ENCODE measurements at regions of chr4 and their contacts with region 1.

Region 1: DNA sequence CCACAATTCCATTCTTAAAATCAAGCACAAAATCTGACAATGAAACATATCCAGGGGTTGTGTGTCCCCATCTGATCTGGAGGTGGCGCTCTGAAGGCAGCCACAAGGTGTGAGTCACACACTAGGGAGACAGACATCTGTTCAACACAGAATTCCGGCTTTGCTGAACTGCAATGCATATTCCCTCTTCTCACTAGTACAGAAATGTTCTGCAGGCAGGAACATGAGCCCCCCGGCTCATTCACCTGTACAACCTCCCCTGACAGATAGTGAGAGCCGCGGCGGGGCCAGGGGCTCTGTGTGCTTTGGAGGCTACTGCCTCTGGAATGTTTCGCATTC is 41.9 kb downstream of the WDR1 start:
- DNase-seq: no peak
- ATAC-seq: no peak
- H3K4me3 ChIP-seq: no peak overlapping the region
- H3K27ac ChIP-seq: no peak overlapping the region
- H3K4me1 ChIP-seq: peaks cover 6 to 29% (median 22%) of the 10 kb centered on the region in 9 donors
- H3K27me3 ChIP-seq: no peaks in the 10 kb centered on the region
- CTCF ChIP-seq: peak in 5 of 9 donors; percentile 27 to 44 (median 42)

Region 2: DNA sequence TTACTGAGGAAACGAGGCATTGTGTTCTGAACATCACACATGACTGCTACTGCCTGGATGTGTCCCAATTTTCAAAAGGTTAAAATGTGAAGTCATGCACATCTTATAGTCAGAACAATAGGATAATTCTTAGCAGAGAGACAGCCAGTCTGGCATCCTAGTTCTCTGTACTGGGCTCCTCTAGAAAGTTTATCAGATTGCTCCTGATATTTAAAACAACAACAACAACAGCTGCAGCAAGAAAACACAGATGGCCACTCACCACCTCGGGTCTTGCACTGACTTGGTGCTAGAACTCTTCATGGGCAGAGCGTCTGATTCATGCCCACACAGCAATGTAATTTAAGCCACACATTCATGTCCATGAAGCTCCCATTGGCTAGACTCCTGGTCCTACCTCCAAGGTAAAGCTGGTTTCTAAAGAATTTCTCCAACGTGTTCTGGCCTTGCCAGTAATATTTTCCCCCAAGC is 20.1 kb before region 1 on chr4:
- intact Hi-C with region 1: loop called in 1 of 10 experiments (anchors 2 kb)
- DNase-seq: no peak
- ATAC-seq: peak; percentile 50 to 84 (median 73)
- H3K4me3 ChIP-seq: no peak overlapping the region
- H3K27ac ChIP-seq: peak overlapping the region; percentile 13 to 86 (median 46)
- H3K4me1 ChIP-seq: peaks cover 0 to 44% (median 12%) of the 10 kb centered on the region in 9 donors
- H3K27me3 ChIP-seq: no peaks in the 10 kb centered on the region
- CTCF ChIP-seq: no peak

Region 3: DNA sequence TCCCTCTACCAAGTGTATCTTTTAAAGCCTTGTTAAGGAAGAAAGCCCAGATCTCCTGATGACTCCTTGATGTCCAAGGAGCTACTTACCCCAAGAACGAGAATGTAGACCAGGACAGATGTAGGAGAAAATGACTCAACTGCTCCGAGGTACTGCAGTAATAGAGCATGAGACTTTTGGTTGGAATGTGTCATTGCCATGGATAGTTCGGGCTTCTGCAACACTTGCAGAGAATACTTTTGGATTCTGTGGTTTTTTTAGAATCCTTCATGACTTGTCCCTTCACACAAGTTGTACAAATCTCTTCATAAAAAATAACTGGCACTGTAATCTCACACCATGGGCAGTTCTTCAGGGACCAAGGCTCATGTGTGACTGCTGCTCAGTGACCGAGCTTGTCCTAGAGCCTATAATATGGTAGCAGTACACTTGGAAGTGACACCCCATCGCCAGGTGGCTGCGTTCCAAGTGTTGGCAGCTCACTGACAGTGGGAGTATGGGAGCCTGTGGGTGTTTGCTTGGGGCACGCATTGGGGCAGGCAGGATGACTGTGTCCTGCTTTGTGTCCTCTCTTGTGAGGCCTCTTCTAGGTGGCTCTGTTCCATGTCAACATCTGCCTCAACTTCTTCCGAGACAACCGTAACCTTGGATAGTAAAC is 129.8 kb after region 1 on chr4:
- intact Hi-C with region 1: no loop called
- DNase-seq: peak; percentile 10 to 52
- ATAC-seq: peak in 5 of 8 donors; percentile 27 to 68 (median 49)
- H3K4me3 ChIP-seq: no peak overlapping the region
- H3K27ac ChIP-seq: no peak overlapping the region
- H3K4me1 ChIP-seq: no peaks in the 10 kb centered on the region
- H3K27me3 ChIP-seq: no peaks in the 10 kb centered on the region
- CTCF ChIP-seq: no peak

Measured in heart right ventricle (tissue), 16 donors.